Endothelial cell of umbilical vein (primary cell): ENCODE measurements at regions of chr13 and their contacts with region 1.

Region 1: GRCh38 chr13:23579072-23579895 is 9.1 kb downstream of the TNFRSF19 start:
- DNase-seq: peak; percentile 81
- H3K4me3 ChIP-seq: peak overlapping the region; percentile 16 to 64 (median 53)
- H3K27ac ChIP-seq: no peak overlapping the region
- H3K4me1 ChIP-seq: peaks cover 13% of the 10 kb centered on the region
- H3K27me3 ChIP-seq: peaks cover 27 to 41% of the 10 kb centered on the region in 2 experiments
- CTCF ChIP-seq: no peak
- POLR2A ChIP-seq: no peak

Region 2: GRCh38 chr13:23707674-23708073 is 128.4 kb after region 1 on chr13:
- CTCF ChIA-PET with region 1: interaction called, 17 read pairs
- POLR2A ChIA-PET with region 1: no interaction called
- dilution Hi-C with region 1: no loop called
- intact Hi-C with region 1: loop called (anchors 5 kb)
- DNase-seq: peak; percentile 23
- H3K4me3 ChIP-seq: no peak overlapping the region
- H3K27ac ChIP-seq: no peak overlapping the region
- H3K4me1 ChIP-seq: no peaks in the 10 kb centered on the region
- H3K27me3 ChIP-seq: no peaks in the 10 kb centered on the region
- CTCF ChIP-seq: peak in 1 of 2 donors; percentile 17
- POLR2A ChIP-seq: no peak